Natural killer cell (primary cell): ENCODE measurements at regions of chr22 and their contacts with region 1.

Region 1: DNA sequence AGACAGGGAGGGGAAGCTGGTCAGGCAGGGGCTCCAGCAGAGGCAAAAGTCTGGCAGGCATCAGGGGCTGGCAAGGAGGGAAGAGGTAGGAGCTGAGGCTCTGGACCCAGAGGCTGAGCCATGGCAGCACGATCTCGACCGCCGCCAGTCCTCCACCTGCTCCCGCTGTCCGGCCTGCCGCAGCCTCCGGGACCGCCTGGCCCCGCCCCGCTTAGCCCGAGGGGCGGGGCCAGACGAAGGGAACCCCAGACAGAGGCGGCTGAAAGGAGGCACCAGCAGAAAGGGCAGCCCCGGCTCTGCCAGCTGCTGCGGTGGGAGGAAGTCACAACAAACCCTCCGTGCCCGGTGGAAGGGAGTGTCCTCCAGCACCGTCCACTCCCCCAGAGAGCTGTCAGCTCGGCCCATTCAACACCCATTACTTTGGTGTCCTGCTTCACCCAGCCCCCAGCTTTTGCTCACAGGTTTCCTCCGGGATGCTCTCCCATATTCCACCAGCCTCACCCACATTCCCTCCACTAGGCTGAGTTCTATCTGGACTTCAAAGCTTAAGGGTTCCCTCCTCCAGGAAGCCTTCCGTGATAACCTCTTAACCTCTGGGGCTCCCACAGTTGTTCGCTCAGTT is at the start of gene MFNG:
- DNase-seq: peak; percentile 70 to 85
- ATAC-seq: peak; percentile 77 to 85 (median 81)
- H3K4me3 ChIP-seq: peak within 1 kb of the TSS; percentile 91
- H3K4me3 Mint-ChIP-seq: peak within 1 kb of the TSS; percentile 94
- H3K27ac ChIP-seq: peak within 1 kb of the TSS; percentile 85
- H3K27ac Mint-ChIP-seq: peak within 1 kb of the TSS; percentile 95 to 96
- H3K4me1 ChIP-seq: peaks cover 74% of the 10 kb centered on the region
- H3K4me1 Mint-ChIP-seq: peaks cover 59 to 78% of the 10 kb centered on the region in 2 donors
- H3K27me3 ChIP-seq: no peaks in the 10 kb centered on the region
- H3K27me3 Mint-ChIP-seq: no peaks in the 10 kb centered on the region
- CTCF ChIP-seq: no peak
- total RNA-seq, gene MFNG: 75.3 to 111 (median 110) TPM

Region 2: DNA sequence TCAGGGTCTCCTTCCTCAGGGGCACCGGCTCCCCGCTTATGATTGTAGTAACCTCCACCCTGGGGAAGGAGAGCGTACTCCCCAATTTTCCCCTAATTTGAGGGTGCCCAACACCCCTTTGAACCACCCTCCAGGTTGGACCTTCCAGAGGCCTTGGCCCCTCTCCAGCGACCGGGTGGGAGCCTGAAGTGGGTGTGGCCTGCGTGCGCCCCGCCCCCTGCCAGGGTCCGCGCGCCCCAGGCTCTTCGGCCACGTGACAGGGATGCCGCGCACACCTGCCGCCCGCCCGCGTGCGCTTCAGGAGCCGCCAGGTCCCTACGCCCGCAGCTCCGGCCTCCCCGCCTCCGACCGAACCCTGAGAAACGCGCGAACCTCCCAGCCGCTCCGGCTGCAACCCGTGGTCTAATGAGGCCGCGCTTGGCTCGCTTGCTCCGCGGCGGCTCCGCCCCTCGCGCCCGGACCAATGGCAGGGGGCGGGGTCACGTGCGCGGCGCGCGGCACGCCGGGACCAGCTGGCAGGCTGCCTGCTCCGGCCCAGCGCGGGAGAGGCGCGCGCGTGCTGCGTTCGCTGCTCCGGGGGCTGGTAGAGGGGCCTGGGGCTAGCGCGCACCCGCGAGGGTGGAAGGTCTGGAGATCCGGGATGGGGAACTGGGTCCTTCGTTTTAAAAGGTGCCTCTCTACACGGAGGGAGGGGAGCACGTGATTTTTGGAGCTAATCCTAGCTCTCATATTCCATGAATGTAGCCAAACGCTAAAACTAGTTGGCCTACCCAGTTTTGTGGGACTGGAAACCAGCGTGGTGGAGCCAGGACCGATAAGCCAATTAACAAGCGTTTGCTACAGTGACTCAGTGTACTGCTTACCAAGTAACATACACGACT is 979.5 kb before region 1 on chr22 and contains the start of gene FOXRED2:
- intact Hi-C with region 1: no loop called
- DNase-seq: peak; percentile 92 to 95
- ATAC-seq: peak; percentile 97 to 98 (median 98)
- H3K4me3 ChIP-seq: peak within 1 kb of the TSS; percentile 43
- H3K4me3 Mint-ChIP-seq: peak within 1 kb of the TSS; percentile 83
- H3K27ac ChIP-seq: peak within 1 kb of the TSS; percentile 27
- H3K27ac Mint-ChIP-seq: peak within 1 kb of the TSS; percentile 6 to 79
- H3K4me1 ChIP-seq: peaks cover 16% of the 10 kb centered on the region
- H3K4me1 Mint-ChIP-seq: peaks cover 8 to 13% of the 10 kb centered on the region in 2 donors
- H3K27me3 ChIP-seq: no peaks in the 10 kb centered on the region
- H3K27me3 Mint-ChIP-seq: no peaks in the 10 kb centered on the region
- CTCF ChIP-seq: no peak
- total RNA-seq, gene FOXRED2: 1.7 to 2.0 (median 1.9) TPM

Region 3: GRCh38 chr22:36775964-36776669 is 710.2 kb before region 1 on chr22 and contains the start of gene IFT27:
- intact Hi-C with region 1: loop called (anchors 10 kb)
- DNase-seq: peak; percentile 91 to 99
- ATAC-seq: peak; percentile 86 to 96 (median 89)
- H3K4me3 ChIP-seq: peak within 1 kb of the TSS; percentile 63
- H3K4me3 Mint-ChIP-seq: peak within 1 kb of the TSS; percentile 87
- H3K27ac ChIP-seq: peak within 1 kb of the TSS; percentile 78
- H3K27ac Mint-ChIP-seq: peak within 1 kb of the TSS; percentile 92 to 94
- H3K4me1 ChIP-seq: peaks cover 16% of the 10 kb centered on the region
- H3K4me1 Mint-ChIP-seq: peaks cover 19 to 22% of the 10 kb centered on the region in 2 donors
- H3K27me3 ChIP-seq: no peaks in the 10 kb centered on the region
- H3K27me3 Mint-ChIP-seq: no peaks in the 10 kb centered on the region
- CTCF ChIP-seq: no peak
- total RNA-seq, gene IFT27: 16.5 to 30.1 (median 27.1) TPM

Region 4: DNA sequence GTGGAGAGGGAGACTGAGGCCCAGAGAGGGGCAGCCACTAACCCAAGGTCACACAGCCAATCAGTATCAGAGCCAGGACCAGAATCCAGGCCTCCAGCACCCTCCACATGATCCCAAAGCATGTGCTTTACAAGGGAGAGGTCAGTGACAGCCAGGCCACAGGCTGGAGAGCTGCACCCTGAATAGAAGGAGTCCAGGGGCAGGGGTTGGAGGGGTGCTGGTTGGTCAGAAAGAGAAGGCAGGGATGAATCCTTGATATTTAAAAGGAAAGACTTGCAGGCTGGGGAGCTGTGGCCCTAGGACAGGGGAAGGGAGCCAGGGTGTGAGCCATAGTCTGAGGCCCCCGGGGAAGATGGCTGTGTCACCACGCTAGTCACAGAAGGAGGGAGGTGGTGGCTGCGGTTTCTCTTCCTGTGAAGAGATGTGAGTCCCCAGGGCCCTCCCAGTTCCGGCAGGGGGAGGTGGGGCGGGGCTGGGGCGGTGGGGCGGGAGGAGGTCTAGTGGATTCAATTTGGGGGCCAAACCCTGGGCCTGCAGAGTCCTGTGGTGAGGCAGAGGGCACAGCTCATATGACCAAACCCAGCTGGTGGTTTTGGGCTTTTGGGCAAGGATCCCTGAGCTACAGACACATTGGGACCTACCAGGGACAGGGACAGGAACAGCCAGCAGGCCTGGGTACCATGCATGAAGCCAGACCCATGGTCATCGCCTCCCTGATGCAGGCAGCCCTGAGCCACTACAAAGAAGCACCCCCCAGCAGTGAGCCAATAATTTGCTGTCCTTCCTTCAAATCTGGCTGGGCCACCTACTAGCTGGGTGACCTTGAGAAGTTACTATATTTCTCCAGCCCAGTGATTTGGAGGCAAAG is 256.3 kb before region 1 on chr22:
- intact Hi-C with region 1: no loop called
- DNase-seq: peak; percentile 85 to 96
- ATAC-seq: peak; percentile 78 to 93 (median 93)
- H3K4me3 ChIP-seq: peak overlapping the region; percentile 11
- H3K4me3 Mint-ChIP-seq: peak overlapping the region; percentile 81
- H3K27ac ChIP-seq: peak overlapping the region; percentile 97
- H3K27ac Mint-ChIP-seq: peak overlapping the region; percentile 93 to 98
- H3K4me1 ChIP-seq: peaks cover 94% of the 10 kb centered on the region
- H3K4me1 Mint-ChIP-seq: peaks cover 82 to 90% of the 10 kb centered on the region in 2 donors
- H3K27me3 ChIP-seq: no peaks in the 10 kb centered on the region
- H3K27me3 Mint-ChIP-seq: no peaks in the 10 kb centered on the region
- CTCF ChIP-seq: no peak